GM12878 (cell line): ENCODE measurements at regions of chr3 and their contacts with region 1.

Region 1: DNA sequence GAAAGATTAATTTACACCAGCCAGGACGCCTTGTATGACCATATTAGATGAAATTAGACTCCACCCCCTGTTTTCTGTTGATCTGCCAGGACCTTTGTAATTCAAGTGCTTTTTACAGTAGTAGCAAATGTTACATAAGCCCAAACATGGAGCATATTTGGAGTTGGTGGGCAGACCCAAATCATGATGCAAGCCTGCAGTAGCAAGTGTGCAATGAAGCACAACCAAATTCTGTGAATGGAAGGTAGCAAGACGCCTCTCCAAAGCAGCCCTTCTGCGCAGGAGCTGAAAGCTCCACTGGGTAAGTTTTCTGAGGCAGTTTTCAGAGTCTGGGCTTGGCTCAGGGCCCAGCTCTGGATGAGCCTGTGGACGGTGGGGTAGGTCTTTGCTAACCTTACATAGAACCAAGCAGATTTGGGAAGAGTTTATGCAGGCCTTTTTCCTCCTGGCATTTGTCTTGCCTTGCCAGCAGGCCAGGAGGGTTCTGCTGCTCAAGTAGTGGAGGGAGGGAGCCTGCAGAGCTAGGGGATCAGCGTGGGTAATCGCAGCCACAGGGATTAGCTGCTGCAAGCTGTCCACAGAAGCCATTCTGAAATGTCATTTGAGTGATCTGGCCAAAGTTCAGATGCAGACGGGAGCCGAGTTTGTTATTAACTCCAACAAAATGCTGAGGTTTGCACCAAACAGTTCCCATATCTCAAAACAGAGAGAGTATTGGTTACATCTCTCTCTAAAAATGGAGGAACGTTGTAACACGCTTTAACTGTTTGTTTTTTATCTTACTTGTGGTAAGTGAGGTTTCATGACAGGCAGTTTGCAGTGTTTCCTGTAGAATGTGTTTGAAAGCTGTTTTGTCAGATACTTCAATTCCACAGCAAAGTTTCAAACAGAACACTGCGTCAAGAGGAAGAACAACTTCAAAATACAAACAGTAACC is 55.4 kb downstream of the PSMD6 start:
- DNase-seq: peak; percentile 53
- ATAC-seq: peak; percentile 68
- H3K4me3 ChIP-seq: peak overlapping the region; percentile 61
- H3K27ac ChIP-seq: peak overlapping the region; percentile 58
- H3K4me1 ChIP-seq: peaks cover 41% of the 10 kb centered on the region
- H3K27me3 ChIP-seq: no peaks in the 10 kb centered on the region
- CTCF ChIP-seq: no peak
- EP300 ChIP-seq: 0 out of 4 replicates have a peak, but pooled peaks of 1 of the 2 experiments have one; percentile 16
- POLR2A ChIP-seq: no peak
- RAD21 ChIP-seq: no peak

Region 2: DNA sequence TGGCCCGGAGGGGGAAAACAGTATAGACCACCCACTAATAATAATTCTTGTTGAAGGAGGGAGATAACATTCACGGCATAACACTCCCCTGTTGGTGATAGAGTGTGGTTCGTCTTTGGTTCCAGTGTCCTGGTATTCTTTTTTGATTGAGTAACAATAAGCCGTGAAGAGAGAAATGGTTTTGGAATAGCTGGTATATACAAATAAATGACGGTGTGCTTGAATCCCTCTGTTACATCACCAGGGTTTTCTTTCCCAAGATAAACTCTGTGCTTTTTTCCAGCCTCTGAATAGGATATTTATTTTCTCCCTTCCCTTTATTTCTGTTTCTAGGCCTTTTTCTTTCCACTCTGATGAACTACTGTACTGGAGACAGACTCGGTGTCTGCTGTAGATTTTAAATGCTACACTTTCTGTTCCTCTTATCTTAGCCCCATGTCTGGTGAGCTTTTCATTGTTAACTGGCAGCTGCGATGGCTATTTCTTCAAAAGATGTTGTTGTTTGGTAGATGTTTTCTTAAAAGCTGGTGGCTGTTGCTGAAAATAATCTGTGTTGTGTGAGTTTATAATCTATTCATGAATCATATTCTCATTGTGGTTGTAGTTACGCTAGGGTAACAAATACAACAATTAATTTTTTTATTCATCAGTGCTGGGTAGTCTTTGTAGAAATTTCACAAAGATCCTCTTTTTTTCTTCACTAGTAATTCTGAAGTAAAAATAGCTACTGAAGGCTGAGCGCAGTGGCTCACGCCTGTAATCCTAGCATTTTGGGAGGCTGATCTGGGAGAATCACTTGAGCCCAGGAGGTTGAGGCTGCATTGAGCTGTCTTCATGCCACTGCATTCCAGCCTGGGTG is 40.3 kb before region 1 on chr3:
- CTCF ChIA-PET with region 1: interaction called, 4 read pairs
- POLR2A ChIA-PET with region 1: no interaction called
- RAD21 ChIA-PET with region 1: interaction called, 4 read pairs
- SMC1A ChIA-PET with region 1: interaction called, 10 read pairs
- in situ Hi-C with region 1: no loop called
- intact Hi-C with region 1: no loop called
- DNase-seq: no peak
- ATAC-seq: peak; percentile 86
- H3K4me3 ChIP-seq: no peak overlapping the region
- H3K27ac ChIP-seq: no peak overlapping the region; the same call in 1 of the 2 replicates
- H3K4me1 ChIP-seq: peaks cover 26% of the 10 kb centered on the region
- H3K27me3 ChIP-seq: no peaks in the 10 kb centered on the region
- CTCF ChIP-seq: no peak
- EP300 ChIP-seq: peak; percentile 39 to 47; a peak in 1 of 4 replicates
- POLR2A ChIP-seq: no peak
- RAD21 ChIP-seq: no peak

Region 3: DNA sequence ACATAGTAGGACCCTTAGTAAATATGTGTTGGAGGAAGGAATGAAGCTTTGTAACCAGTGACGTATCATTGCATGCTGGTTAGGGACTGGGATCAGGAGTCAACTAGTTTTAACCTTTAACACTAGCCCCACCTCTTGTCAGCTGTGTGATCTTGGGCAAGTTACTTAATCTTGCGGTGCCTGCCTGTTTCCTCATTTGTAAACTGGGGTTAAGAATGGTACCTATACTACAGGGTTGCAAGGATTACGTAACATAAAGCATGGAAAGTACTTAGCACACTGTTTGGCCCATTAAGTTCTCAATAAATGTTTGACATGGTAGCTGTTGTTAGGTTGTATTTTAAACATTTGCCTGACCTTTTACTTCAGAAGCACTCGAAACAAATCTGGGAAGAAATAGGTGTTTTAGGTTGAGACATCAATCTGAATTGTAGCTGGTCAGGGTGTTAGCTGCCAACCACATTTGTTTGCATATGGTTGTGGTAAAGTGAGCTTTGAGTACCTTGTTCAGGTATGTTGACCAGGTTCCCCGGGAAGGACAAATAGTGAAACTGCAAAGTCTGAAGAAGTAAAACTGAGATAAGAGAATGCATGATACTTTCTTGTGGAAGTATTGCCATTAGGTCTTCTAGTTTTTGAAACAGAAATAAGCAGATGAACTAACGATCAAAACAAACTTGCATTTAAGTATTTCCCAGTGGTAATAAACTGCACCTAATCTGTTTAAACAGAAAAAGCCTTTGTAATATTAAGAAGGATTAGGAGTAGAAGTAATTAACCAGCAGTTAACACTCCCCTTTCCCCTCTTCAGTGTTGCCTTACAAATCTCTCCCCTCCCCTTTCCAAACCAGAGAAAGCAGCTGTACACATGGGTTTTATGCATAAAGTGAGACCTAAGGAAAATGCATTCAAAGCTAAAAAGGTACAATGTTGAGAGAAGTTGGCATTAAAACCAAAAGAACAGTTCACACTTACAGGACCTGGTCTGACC is 30.0 kb before region 1 on chr3:
- CTCF ChIA-PET with region 1: interaction called, 7 read pairs
- POLR2A ChIA-PET with region 1: interaction called, 3 read pairs
- RAD21 ChIA-PET with region 1: interaction called, 5 read pairs
- SMC1A ChIA-PET with region 1: interaction called, 29 read pairs
- in situ Hi-C with region 1: no loop called
- intact Hi-C with region 1: no loop called
- DNase-seq: peak; percentile 55
- ATAC-seq: peak; percentile 83
- H3K4me3 ChIP-seq: peak overlapping the region; percentile 11; the same call in 1 of the 2 replicates
- H3K27ac ChIP-seq: peak overlapping the region; percentile 44; the same call in 1 of the 2 replicates
- H3K4me1 ChIP-seq: peaks cover 43% of the 10 kb centered on the region
- H3K27me3 ChIP-seq: no peaks in the 10 kb centered on the region
- CTCF ChIP-seq: peak in 1 of 3 experiments; percentile 27; a peak in 1 of 6 replicates
- EP300 ChIP-seq: 0 out of 4 replicates have a peak, but pooled peaks of 1 of the 2 experiments have one; percentile 8
- POLR2A ChIP-seq: no peak
- RAD21 ChIP-seq: no peak

Region 4: GRCh38 chr3:64023187-64023848 is 55.4 kb after region 1 on chr3 and contains the start of gene PSMD6:
- CTCF ChIA-PET with region 1: interaction called, 20 read pairs
- POLR2A ChIA-PET with region 1: no interaction called
- RAD21 ChIA-PET with region 1: no interaction called
- SMC1A ChIA-PET with region 1: interaction called, 4 read pairs
- in situ Hi-C with region 1: no loop called
- intact Hi-C with region 1: no loop called
- DNase-seq: peak; percentile 49
- ATAC-seq: peak; percentile 95
- H3K4me3 ChIP-seq: peak within 1 kb of the TSS; percentile 86
- H3K27ac ChIP-seq: peak within 1 kb of the TSS; percentile 87
- H3K4me1 ChIP-seq: no peaks in the 10 kb centered on the region
- H3K27me3 ChIP-seq: no peaks in the 10 kb centered on the region
- CTCF ChIP-seq: peak; percentile 99 to 100 (median 100); a peak in 5 of 6 replicates
- EP300 ChIP-seq: 0 out of 4 replicates have a peak, but pooled peaks of 1 of the 2 experiments have one; percentile 18
- POLR2A ChIP-seq: peak; percentile 97
- RAD21 ChIP-seq: peak; percentile 28; the same call in 1 of the 2 replicates
- polyA plus RNA-seq, gene PSMD6: 84.3 to 124 TPM